CD8-positive, alpha-beta T cell (primary cell): ENCODE measurements at regions of chr6 and their contacts with region 1.

Region 1: DNA sequence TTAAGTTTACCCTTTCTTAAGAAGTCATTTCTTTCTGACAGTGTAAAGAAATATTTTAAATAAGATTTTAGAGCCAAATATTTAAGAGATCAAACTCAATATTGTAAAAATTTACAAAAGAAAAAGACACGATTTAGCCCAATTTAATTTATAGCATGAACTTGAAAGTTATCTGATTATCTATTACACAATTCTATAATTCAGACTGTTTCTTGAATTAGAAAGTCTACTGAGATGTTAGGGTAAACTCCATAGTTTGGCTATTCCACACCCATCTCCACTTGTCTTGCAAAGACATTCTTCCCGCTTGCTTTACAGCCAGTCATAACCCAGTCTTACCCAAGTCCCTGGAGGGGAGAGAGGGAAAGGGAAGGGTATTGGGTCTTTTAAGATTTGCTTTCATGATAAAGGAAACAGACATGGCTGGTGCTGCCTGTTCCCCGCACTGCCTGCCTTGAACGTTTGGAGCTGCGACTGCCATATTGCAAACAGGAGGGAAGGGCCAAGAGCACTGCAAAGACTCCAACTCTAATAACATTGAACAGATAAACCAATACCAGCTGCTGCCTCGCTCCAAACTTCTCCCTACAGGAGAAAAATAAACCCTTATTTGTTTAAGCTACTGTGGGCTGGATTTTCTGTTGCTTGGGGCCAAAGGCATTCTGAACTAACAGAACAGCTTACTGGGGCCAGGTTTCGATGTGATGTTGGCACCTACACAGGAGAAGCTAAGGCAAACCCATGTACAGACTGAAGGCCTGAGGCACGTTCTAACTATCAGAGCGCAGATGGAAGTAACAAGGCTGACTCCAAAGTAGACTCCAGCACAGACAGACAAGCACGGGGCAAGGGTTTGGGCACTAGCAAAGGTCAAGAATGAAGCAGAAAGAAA is 552.3 kb upstream of the JARID2 start:
- DNase-seq: no peak
- ATAC-seq: no peak
- H3K4me3 ChIP-seq: no peak overlapping the region
- H3K4me3 Mint-ChIP-seq: no peak overlapping the region
- H3K27ac ChIP-seq: no peak overlapping the region
- H3K27ac Mint-ChIP-seq: no peak overlapping the region
- H3K4me1 ChIP-seq: no peaks in the 10 kb centered on the region
- H3K4me1 Mint-ChIP-seq: no peaks in the 10 kb centered on the region
- H3K27me3 ChIP-seq: no peaks in the 10 kb centered on the region
- H3K27me3 Mint-ChIP-seq: peaks cover 4% of the 10 kb centered on the region
- CTCF ChIP-seq: no peak

Region 2: DNA sequence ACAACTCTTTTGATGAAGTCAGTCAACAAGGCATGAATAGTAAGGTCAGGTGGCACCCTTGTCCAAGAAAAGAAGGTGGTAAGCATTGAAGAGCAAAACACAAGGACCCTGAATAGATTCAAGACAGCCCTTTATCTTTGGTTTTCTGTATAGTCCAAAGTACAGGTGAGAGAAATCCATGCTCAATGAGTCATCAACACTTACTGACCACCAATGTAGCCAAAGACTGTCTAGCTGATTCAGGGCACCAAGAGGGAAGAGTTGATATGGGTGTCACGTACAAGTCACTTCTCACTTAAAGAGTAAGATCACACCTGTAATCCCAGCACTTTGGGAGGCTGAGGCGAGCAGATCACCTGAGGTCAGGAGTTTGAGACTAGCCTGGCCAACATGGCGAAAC is 47.7 kb before region 1 on chr6:
- CTCF ChIA-PET with region 1: no interaction called
- POLR2A ChIA-PET with region 1: no interaction called
- intact Hi-C with region 1: loop called in 1 of 2 experiments (anchors 1 kb)
- DNase-seq: peak in 1 of 9 experiments; percentile 7
- ATAC-seq: no peak
- H3K4me3 ChIP-seq: no peak overlapping the region
- H3K4me3 Mint-ChIP-seq: no peak overlapping the region
- H3K27ac ChIP-seq: no peak overlapping the region
- H3K27ac Mint-ChIP-seq: no peak overlapping the region
- H3K4me1 ChIP-seq: no peaks in the 10 kb centered on the region
- H3K4me1 Mint-ChIP-seq: no peaks in the 10 kb centered on the region
- H3K27me3 ChIP-seq: no peaks in the 10 kb centered on the region
- H3K27me3 Mint-ChIP-seq: no peaks in the 10 kb centered on the region
- CTCF ChIP-seq: no peak